A549 (cell line): ENCODE measurements at regions of chr17 and their contacts with region 1.

Region 1: DNA sequence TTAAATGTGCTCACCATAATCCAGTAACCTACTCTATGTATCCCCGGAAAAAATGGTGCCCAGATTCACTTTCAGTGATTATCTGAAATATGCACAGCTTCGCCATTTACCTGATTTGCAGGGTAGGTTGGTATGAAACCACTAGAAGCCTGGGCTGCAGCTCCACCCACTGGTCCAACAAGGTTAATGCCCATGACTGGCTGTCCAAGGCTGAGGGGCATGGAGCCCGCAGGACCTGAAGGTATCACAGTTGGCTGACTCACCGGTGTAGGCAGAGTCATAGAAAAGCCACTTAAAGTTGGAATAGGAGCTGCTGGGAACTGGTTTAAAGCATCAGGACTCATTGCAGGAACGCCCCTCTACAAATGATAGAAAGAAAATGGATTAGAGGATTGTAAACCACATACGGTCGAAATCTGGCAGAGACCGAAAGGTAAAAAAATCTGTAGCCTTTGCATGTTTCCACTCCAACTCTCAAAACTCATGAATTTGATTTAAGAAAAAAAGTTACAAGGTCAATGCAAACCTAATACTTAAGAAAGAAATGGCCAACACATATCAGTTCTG is 38.6 kb downstream of the SYNRG start:
- DNase-seq: peak; percentile 81 to 87
- ATAC-seq: peak; percentile 100
- H3K4me3 ChIP-seq: no peak overlapping the region
- H3K27ac ChIP-seq: no peak overlapping the region
- H3K4me1 ChIP-seq: peaks cover 4% of the 10 kb centered on the region; the same call in 1 of the 3 replicates
- CTCF ChIP-seq: peak; percentile 68
- EP300 ChIP-seq: no peak
- POLR2A ChIP-seq: no peak
- RAD21 ChIP-seq: peak; percentile 66 to 82

Region 2: GRCh38 chr17:37465069-37465616 is 105.5 kb before region 1 on chr17:
- CTCF ChIA-PET with region 1: no interaction called
- POLR2A ChIA-PET with region 1: no interaction called
- DNase-seq: no peak
- ATAC-seq: no peak
- H3K4me3 ChIP-seq: no peak overlapping the region
- H3K27ac ChIP-seq: no peak overlapping the region
- H3K4me1 ChIP-seq: no peaks in the 10 kb centered on the region
- CTCF ChIP-seq: no peak
- EP300 ChIP-seq: no peak
- POLR2A ChIP-seq: no peak
- RAD21 ChIP-seq: no peak

Region 3: GRCh38 chr17:37516127-37516571 is 54.5 kb before region 1 on chr17:
- CTCF ChIA-PET with region 1: interaction called, 15 read pairs
- POLR2A ChIA-PET with region 1: no interaction called
- DNase-seq: no peak
- ATAC-seq: no peak
- H3K4me3 ChIP-seq: no peak overlapping the region
- H3K27ac ChIP-seq: no peak overlapping the region
- H3K4me1 ChIP-seq: no peaks in the 10 kb centered on the region
- CTCF ChIP-seq: no peak
- EP300 ChIP-seq: no peak
- POLR2A ChIP-seq: no peak
- RAD21 ChIP-seq: no peak

Region 4: DNA sequence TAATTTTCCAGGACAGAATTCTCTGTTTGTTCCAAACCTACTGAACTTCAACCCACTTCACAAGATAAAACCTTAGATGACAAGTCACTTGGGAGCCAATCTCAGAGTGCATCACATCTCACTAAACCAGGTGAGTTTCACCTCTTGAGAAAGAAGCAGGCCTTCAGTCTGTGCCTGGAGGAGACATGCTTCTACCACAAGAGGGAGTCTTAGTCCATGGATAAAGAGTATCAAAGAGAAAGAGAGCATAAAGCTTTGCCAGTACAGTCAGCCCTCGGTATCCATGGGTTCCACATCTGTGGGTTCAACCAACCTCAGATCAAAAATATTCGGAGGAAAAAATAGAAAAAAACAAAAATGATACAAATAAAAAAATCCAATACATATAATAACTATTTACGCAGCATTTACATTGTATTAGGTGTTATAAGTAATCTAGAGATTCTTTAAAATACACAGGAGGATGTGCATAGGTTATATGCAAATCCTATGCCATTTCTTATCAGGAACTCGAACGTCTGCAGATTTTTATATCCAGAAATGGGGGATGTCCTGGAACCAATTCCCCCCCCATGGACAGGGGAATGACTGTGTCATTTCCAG is 43.3 kb before region 1 on chr17:
- CTCF ChIA-PET with region 1: interaction called, 27 read pairs
- POLR2A ChIA-PET with region 1: interaction called, 3 read pairs
- DNase-seq: peak; percentile 70 to 78
- ATAC-seq: peak; percentile 95 to 97
- H3K4me3 ChIP-seq: no peak overlapping the region
- H3K27ac ChIP-seq: no peak overlapping the region
- H3K4me1 ChIP-seq: no peaks in the 10 kb centered on the region
- CTCF ChIP-seq: peak; percentile 91
- EP300 ChIP-seq: no peak
- POLR2A ChIP-seq: no peak
- RAD21 ChIP-seq: peak; percentile 82 to 89

Region 5: GRCh38 chr17:37541880-37542660 is 28.5 kb before region 1 on chr17:
- CTCF ChIA-PET with region 1: interaction called, 10 read pairs
- POLR2A ChIA-PET with region 1: no interaction called
- DNase-seq: no peak
- ATAC-seq: no peak
- H3K4me3 ChIP-seq: no peak overlapping the region
- H3K27ac ChIP-seq: no peak overlapping the region; a peak in 1 of 6 replicates
- H3K4me1 ChIP-seq: peaks cover 7% of the 10 kb centered on the region; the same call in 2 of the 3 replicates
- CTCF ChIP-seq: no peak
- EP300 ChIP-seq: no peak
- POLR2A ChIP-seq: no peak
- RAD21 ChIP-seq: no peak

Region 6: GRCh38 chr17:37551788-37552187 is 18.8 kb before region 1 on chr17:
- CTCF ChIA-PET with region 1: interaction called, 66 read pairs
- POLR2A ChIA-PET with region 1: no interaction called
- DNase-seq: no peak
- ATAC-seq: no peak
- H3K4me3 ChIP-seq: no peak overlapping the region
- H3K27ac ChIP-seq: no peak overlapping the region
- H3K4me1 ChIP-seq: no peaks in the 10 kb centered on the region
- CTCF ChIP-seq: no peak
- EP300 ChIP-seq: no peak
- POLR2A ChIP-seq: no peak
- RAD21 ChIP-seq: no peak

Region 7: GRCh38 chr17:37592291-37592690 is 21.7 kb after region 1 on chr17:
- CTCF ChIA-PET with region 1: interaction called, 10 read pairs
- POLR2A ChIA-PET with region 1: no interaction called
- DNase-seq: no peak
- ATAC-seq: no peak
- H3K4me3 ChIP-seq: no peak overlapping the region
- H3K27ac ChIP-seq: no peak overlapping the region
- H3K4me1 ChIP-seq: peaks cover 14% of the 10 kb centered on the region
- CTCF ChIP-seq: no peak
- EP300 ChIP-seq: no peak
- POLR2A ChIP-seq: no peak
- RAD21 ChIP-seq: no peak